CD14-positive monocyte (primary cell): ENCODE measurements at regions of chr5 and their contacts with region 1.

Region 1: DNA sequence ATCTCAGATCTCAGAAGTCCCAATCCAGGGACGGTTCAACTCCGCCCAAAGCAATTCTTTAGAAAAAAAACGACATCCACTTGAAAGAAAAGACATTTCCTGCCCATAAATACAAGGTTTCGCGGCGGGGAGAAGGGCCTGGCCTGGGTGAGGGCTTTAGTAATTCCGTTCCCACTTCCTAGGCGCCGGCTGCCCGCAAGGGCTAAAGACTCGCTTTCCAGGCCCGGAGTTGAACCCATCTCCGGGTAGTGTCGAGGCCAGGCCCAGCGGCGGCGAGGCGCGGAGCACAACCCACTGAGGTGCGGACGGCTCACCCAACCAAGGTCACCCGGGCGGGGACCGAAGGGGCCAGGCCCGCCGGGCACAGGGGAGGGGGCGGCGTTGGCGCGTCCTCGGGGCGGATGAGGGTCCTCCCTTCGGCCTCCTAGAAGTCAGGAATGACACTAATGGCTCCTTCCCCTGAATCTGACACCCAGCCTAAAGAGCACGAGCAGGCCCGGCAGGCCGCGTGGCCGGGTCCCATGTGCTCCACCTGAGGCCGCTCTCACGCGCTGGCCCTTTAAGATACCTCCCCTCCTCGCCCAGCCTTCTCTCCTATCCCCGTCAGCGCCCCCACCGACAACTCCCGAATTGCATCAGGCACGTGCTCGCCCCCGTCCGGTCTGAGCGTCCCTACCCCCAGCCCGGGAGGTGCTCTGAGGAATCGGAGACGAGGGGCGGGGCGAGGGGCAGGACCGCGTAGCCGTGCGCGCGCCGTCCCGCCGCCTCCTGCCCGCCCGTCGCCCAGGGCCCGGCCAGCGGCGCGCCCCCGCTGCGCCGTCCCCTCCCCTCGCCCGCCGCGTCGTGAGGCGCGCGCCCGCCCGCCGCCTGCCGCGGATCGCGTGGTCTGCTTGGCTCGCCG is 467 bp upstream of the LARP1 start:
- DNase-seq: peak; percentile 96 to 98 (median 98)
- H3K4me3 ChIP-seq: peak overlapping the region; percentile 67 to 96 (median 91)
- H3K4me3 Mint-ChIP-seq: peak overlapping the region; percentile 90 to 93
- H3K27ac ChIP-seq: peak overlapping the region; percentile 79 to 96
- H3K27ac Mint-ChIP-seq: peak overlapping the region; percentile 87 to 96 (median 94)
- H3K4me1 ChIP-seq: peaks cover 30 to 35% of the 10 kb centered on the region in 2 donors
- H3K4me1 Mint-ChIP-seq: peaks cover 40% of the 10 kb centered on the region
- H3K27me3 ChIP-seq: no peaks in the 10 kb centered on the region
- H3K27me3 Mint-ChIP-seq: no peaks in the 10 kb centered on the region
- CTCF ChIP-seq: no peak

Region 2: DNA sequence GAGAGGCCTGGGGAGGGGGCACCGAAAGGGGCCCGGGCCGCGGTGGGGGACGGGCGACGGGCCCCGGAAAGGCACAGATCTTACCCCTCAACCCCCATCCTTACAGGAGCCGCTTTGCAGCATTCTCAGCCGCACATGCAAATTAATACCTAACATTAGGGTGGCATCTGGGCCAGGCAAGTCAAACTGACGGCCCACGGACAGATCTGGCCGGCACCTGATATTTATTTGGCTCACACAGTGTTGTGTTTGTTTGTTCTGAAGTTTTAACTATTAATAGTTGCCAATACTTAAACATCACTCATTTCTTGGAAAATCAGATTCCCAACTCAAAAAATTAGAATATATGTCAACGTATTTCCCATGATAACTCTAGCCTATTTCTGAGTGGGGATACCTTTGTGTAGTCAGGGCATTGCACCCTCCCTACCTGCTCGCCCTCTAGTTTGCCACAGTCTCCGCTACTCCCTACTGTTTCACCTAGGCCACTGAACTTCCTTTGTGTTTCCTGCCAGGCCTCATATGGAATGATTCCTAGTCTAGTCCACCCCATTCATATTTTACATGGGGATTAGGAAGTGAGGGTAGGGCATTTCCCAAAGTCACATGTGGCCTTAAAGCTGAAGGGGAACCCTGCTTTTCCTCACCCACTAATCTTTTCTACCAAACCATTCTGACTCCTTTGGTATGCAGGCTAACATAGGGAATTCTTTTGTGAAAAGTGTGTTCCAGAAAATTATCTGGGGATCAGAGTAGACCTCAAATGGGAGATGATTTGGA is 71.4 kb before region 1 on chr5:
- intact Hi-C with region 1: loop called in 1 of 2 experiments (anchors 2 kb)
- DNase-seq: peak in 2 of 3 donors; percentile 40 to 70
- H3K4me3 ChIP-seq: peak overlapping the region; percentile 51 to 74 (median 65)
- H3K4me3 Mint-ChIP-seq: peak overlapping the region; percentile 78 to 83
- H3K27ac ChIP-seq: peak overlapping the region; percentile 74
- H3K27ac Mint-ChIP-seq: peak overlapping the region; percentile 57 to 93 (median 82)
- H3K4me1 ChIP-seq: peaks cover 13 to 23% of the 10 kb centered on the region in 2 donors
- H3K4me1 Mint-ChIP-seq: peaks cover 17% of the 10 kb centered on the region
- H3K27me3 ChIP-seq: no peaks in the 10 kb centered on the region
- H3K27me3 Mint-ChIP-seq: peaks cover 0 to 4% (median 1%) of the 10 kb centered on the region in 3 donors
- CTCF ChIP-seq: no peak

Region 3: GRCh38 chr5:154708846-154709245 is 45.9 kb before region 1 on chr5:
- intact Hi-C with region 1: loop called in 1 of 2 experiments (anchors 2 kb)
- DNase-seq: peak; percentile 44 to 98 (median 90)
- H3K4me3 ChIP-seq: no peak overlapping the region
- H3K4me3 Mint-ChIP-seq: peak overlapping the region in 1 of 2 donors; percentile 15
- H3K27ac ChIP-seq: peak overlapping the region in 1 of 2 donors; percentile 8
- H3K27ac Mint-ChIP-seq: peak overlapping the region; percentile 35 to 98 (median 89)
- H3K4me1 ChIP-seq: peaks cover 5 to 21% of the 10 kb centered on the region in 2 donors
- H3K4me1 Mint-ChIP-seq: peaks cover 33% of the 10 kb centered on the region
- H3K27me3 ChIP-seq: no peaks in the 10 kb centered on the region
- H3K27me3 Mint-ChIP-seq: peaks cover 0 to 2% (median 2%) of the 10 kb centered on the region in 3 donors
- CTCF ChIP-seq: no peak

Region 4: DNA sequence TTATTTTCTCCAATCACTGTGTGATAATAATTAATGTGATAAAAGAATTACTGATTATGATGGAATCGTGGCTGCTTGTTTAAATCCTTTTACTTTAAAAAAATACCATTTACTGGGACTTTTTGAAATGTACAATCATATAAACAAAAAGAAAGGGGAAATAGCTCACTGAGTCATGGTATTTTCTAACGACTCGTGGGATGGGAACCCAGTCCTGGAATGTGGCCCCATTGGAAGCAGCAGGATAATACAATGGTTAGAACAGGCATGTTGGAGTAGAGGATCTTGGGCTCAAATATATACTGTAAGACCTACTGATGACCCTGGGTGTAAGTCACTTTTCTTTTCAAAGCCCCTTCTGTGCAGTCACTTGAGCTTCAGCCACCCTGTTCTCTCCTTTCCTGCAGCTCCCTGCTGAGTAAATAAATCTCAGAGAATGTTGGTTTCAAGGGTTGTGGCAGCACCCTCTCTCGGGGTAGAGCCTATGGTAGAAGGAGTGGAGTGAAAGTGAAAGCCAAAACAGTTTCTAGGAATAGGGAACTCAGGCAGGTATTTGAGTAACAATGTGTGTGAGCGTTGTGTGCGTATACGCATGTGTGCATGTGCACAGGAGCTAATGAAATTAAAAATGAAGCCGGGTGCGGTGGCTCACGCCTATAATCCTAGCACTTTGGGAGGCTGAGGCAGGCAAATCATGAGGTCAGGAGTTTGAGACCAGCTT is 40.3 kb before region 1 on chr5:
- intact Hi-C with region 1: loop called (anchors 2 to 5 kb)
- DNase-seq: peak; percentile 63 to 79 (median 76)
- H3K4me3 ChIP-seq: peak overlapping the region; percentile 20 to 78 (median 57)
- H3K4me3 Mint-ChIP-seq: peak overlapping the region; percentile 78 to 92
- H3K27ac ChIP-seq: peak overlapping the region; percentile 30 to 94
- H3K27ac Mint-ChIP-seq: peak overlapping the region; percentile 92 to 98 (median 95)
- H3K4me1 ChIP-seq: peaks cover 17% of the 10 kb centered on the region in 2 donors
- H3K4me1 Mint-ChIP-seq: peaks cover 32% of the 10 kb centered on the region
- H3K27me3 ChIP-seq: no peaks in the 10 kb centered on the region
- H3K27me3 Mint-ChIP-seq: no peaks in the 10 kb centered on the region
- CTCF ChIP-seq: no peak